Transverse colon (tissue), 4 donors: ENCODE measurements at regions of chr9 and their contacts with region 1.

Region 1: DNA sequence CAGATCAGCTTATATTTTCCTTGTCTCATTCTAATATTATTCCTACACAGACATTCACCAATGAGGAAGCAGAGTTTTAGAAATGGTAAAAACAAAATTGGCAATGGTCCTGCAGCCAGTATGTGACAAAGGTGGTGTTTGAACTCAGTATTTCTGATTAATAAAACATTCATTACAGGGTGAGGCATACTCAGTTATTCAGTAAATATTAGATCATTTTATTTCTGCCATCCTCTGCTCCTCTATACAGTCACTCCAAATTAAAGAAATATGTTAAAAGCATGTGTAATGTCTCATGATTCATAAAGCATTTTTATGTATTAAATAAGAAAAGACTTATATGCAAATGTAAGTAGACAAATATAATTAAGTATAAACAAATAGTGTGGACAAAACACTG is 684.6 kb upstream of the ACO1 start:
- DNase-seq: no peak
- H3K4me3 ChIP-seq: no peak overlapping the region
- H3K27ac ChIP-seq: no peak overlapping the region
- H3K4me1 ChIP-seq: no peaks in the 10 kb centered on the region
- H3K27me3 ChIP-seq: no peaks in the 10 kb centered on the region
- CTCF ChIP-seq: no peak
- EP300 ChIP-seq: no peak
- POLR2A ChIP-seq: no peak

Region 2: GRCh38 chr9:31304576-31304975 is 395.3 kb before region 1 on chr9:
- in situ Hi-C with region 1: no loop called
- intact Hi-C with region 1: loop called (anchors 5 kb)
- DNase-seq: no peak
- H3K4me3 ChIP-seq: no peak overlapping the region
- H3K27ac ChIP-seq: no peak overlapping the region
- H3K4me1 ChIP-seq: no peaks in the 10 kb centered on the region
- H3K27me3 ChIP-seq: no peaks in the 10 kb centered on the region
- CTCF ChIP-seq: no peak
- EP300 ChIP-seq: no peak
- POLR2A ChIP-seq: no peak

Region 3: DNA sequence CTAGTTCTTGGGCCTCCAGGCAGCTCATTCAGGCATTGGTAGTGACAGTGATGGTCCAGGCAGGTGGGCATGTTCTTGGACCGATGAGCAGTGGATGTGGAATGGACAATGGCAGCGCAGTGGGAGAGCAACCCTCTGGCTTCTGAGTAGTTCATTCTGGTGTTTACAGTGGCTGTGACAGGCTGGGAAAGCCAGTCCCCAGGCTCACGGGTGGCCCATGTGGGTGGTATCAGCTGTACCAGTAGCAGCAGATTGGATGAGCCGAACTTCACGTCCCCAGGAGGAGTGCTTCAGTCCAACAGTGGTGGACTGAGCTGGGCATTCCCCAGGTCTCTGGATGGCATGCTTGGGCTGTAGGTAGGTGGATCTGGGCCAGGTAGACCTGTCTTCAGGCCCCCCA is 169.0 kb after region 1 on chr9:
- in situ Hi-C with region 1: no loop called
- intact Hi-C with region 1: no loop called
- DNase-seq: no peak
- H3K4me3 ChIP-seq: no peak overlapping the region
- H3K27ac ChIP-seq: no peak overlapping the region
- H3K4me1 ChIP-seq: no peaks in the 10 kb centered on the region
- H3K27me3 ChIP-seq: no peaks in the 10 kb centered on the region
- CTCF ChIP-seq: no peak
- EP300 ChIP-seq: no peak
- POLR2A ChIP-seq: no peak